Activated CD4-positive, alpha-beta T cell treated with anti-CD3 and anti-CD28 coated beads, Interleukin-2, amount 10 ng/mL, durations not matched to agents 24 days and 14 days (primary cell): ENCODE measurements at regions of chr5 and their contacts with region 1.

Region 1: GRCh38 chr5:173057062-173057924 is 1.1 kb downstream of the CREBRF start:
- DNase-seq: peak; percentile 100
- H3K4me3 Mint-ChIP-seq: peak overlapping the region; percentile 95
- H3K27ac Mint-ChIP-seq: peak overlapping the region; percentile 96
- H3K4me1 Mint-ChIP-seq: peaks cover 24% of the 10 kb centered on the region
- H3K27me3 Mint-ChIP-seq: no peaks in the 10 kb centered on the region

Region 2: DNA sequence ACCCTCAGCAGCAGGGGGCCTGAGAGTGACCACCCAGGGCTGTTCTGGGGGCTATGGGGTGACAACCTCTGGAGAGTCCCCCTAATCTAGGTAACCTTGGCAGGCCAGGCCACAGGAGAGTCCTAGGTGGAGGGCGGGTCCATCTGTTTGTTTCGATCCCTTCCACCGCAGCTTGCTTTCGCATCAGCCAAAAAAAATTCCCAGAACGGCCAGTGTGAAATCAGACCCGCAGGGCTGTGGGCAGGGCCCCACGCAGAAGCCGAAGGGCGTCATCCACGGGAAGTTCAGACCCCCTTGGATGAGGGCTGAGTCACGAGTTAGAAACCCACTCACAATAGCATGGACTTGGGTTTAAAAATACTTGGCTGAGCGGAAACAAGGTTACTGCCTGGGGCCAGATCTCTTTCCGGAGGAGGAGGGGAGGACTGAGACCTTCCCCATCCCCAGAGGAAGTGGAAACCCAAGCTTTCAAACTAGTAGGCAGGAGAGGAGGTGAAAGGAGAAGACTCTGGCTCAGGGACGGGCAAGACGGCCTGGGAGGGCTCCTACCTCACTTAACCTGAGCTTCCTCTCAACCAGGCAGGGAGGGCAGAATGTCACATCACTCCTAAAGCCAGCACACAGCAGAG is 877.8 kb before region 1 on chr5:
- intact Hi-C with region 1: loop called (anchors 5 kb)
- DNase-seq: peak; percentile 88
- H3K4me3 Mint-ChIP-seq: peak overlapping the region; percentile 90
- H3K27ac Mint-ChIP-seq: peak overlapping the region; percentile 96
- H3K4me1 Mint-ChIP-seq: peaks cover 78% of the 10 kb centered on the region
- H3K27me3 Mint-ChIP-seq: no peaks in the 10 kb centered on the region

Region 3: GRCh38 chr5:172714491-172715421 is 342.5 kb before region 1 on chr5:
- intact Hi-C with region 1: loop called (anchors 5 kb)
- DNase-seq: peak; percentile 90
- H3K4me3 Mint-ChIP-seq: no peak overlapping the region
- H3K27ac Mint-ChIP-seq: no peak overlapping the region
- H3K4me1 Mint-ChIP-seq: peaks cover 2% of the 10 kb centered on the region
- H3K27me3 Mint-ChIP-seq: peaks cover 10% of the 10 kb centered on the region

Region 4: DNA sequence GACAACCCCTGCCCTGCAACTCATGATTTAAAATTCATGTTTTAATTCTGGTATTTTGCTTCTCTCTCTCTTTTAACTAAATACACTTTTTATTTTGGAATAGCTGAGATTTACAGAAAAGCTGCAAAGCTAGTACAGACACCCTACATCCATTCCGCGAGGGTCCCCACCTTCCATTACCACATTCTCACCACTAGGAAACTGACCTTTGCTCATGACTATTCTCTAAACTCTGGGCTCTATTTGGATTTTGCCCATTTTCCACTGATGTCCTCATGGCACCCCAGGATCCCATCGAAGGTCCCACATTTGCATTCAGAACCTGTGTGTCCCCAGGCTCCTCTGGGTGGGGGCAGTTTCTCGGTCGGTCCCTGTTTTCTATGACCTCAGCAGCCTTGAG is 211.7 kb before region 1 on chr5:
- intact Hi-C with region 1: no loop called
- DNase-seq: no peak
- H3K4me3 Mint-ChIP-seq: no peak overlapping the region
- H3K27ac Mint-ChIP-seq: no peak overlapping the region
- H3K4me1 Mint-ChIP-seq: peaks cover 11% of the 10 kb centered on the region
- H3K27me3 Mint-ChIP-seq: no peaks in the 10 kb centered on the region

Region 5: GRCh38 chr5:172958331-172959046 is 98.8 kb before region 1 on chr5:
- intact Hi-C with region 1: loop called (anchors 1 kb)
- DNase-seq: peak; percentile 86
- H3K4me3 Mint-ChIP-seq: peak overlapping the region; percentile 92
- H3K27ac Mint-ChIP-seq: peak overlapping the region; percentile 90
- H3K4me1 Mint-ChIP-seq: peaks cover 30% of the 10 kb centered on the region
- H3K27me3 Mint-ChIP-seq: peaks cover 4% of the 10 kb centered on the region

Region 6: DNA sequence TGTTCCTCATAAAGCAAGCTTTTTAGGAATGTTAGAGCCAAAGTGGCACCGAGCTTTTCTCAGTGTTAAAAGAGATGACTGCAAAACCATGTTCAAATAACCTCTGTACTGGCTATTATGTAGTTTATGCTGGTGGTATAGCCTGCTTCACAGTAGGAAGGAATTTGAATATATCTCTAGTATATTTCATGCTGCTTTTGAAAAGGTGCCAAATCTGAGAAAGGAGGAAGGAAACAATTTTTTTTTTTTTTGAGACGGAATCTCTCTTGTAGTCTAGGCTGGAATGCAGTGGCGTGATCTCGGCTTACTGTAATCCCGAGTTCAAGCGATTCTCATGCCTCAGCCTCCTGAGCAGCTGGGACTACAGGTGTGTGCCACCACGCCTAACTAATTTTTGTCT is 12.4 kb after region 1 on chr5:
- intact Hi-C with region 1: no loop called
- DNase-seq: no peak
- H3K4me3 Mint-ChIP-seq: no peak overlapping the region
- H3K27ac Mint-ChIP-seq: no peak overlapping the region
- H3K4me1 Mint-ChIP-seq: peaks cover 10% of the 10 kb centered on the region
- H3K27me3 Mint-ChIP-seq: no peaks in the 10 kb centered on the region

Region 7: GRCh38 chr5:173144200-173145176 is 87.2 kb after region 1 on chr5 and contains the start of gene BNIP1:
- intact Hi-C with region 1: loop called (anchors 1 kb)
- DNase-seq: peak; percentile 99
- H3K4me3 Mint-ChIP-seq: peak within 1 kb of the TSS; percentile 97
- H3K27ac Mint-ChIP-seq: peak within 1 kb of the TSS; percentile 98
- H3K4me1 Mint-ChIP-seq: peaks cover 13% of the 10 kb centered on the region
- H3K27me3 Mint-ChIP-seq: no peaks in the 10 kb centered on the region
- total RNA-seq, gene BNIP1: 20.9 and 26.5 TPM in 2 replicates

Region 8: DNA sequence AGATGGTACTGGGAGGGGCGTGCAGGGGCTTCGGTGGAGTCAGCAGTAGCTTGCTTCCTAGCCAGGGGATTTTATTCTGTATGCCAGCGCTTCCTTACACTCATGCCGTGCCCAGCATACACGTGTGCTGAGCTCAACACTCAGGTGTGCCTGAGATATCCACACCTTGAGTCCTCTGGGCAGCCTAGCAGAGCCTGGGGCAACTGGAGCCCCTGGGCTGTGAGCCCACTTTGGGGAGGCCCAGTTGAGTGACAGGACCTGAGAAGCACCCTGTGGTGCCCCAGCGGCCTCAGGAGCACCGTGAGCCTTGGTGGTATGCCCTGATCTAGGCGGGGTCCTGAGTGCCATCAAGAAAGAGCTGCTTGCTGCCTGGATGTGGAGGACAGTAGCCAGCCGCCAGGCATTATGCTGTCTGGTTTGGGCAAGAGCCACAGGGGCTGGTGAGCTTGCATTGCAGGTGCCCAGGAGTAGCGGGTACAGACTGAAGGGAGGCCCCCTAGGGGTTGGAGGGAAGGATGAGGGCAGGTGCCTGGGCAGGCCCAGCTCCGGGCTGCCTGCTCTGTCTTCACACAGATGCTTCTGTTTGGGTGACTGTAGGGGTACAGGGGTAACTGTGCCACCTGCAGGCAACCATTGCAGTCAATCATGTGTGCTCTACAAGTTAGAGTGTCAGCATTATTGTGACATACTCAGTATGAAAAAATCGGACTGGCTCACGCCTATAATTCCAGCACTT is 129.9 kb after region 1 on chr5:
- intact Hi-C with region 1: no loop called
- DNase-seq: peak; percentile 60
- H3K4me3 Mint-ChIP-seq: no peak overlapping the region
- H3K27ac Mint-ChIP-seq: no peak overlapping the region
- H3K4me1 Mint-ChIP-seq: no peaks in the 10 kb centered on the region
- H3K27me3 Mint-ChIP-seq: no peaks in the 10 kb centered on the region